GM10248 (cell line): ENCODE measurements at regions of chr1 and their contacts with region 1.

Region 1: DNA sequence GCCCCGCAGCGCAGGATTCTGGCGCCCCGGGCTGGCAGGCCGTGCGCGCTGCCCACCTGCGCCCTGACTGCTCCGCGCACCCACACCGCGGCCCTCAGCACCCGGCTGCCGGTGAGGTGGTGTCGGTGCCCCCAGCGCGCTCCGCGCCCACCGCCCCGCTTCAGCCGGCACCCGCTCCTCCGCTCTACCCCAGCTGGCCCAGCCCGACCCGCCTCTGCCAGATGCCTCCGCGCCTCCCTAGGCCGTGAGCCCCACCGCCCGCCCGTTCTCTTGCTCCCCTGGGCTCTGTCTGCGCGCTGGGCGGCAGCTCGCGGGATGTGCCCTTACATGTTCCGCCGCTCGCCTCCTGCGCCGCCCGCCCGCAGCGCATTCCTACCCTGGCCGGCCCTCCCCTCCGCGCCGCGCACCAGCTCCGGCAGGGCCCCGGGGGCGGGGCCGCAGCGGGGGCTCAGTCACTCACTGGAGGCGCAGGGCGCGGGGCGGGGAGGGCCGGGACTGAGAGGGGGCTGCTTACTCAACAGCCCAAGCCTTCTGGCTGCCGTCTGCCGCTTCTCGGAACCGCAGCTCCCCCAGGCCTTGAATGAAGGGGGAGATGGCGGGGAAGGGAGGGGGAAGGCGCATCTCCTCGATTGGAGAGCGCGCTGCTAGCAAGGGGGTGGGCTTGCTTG is at the start of gene PHLDA3:
- DNase-seq: peak; percentile 81
- CTCF ChIP-seq: no peak

Region 2: DNA sequence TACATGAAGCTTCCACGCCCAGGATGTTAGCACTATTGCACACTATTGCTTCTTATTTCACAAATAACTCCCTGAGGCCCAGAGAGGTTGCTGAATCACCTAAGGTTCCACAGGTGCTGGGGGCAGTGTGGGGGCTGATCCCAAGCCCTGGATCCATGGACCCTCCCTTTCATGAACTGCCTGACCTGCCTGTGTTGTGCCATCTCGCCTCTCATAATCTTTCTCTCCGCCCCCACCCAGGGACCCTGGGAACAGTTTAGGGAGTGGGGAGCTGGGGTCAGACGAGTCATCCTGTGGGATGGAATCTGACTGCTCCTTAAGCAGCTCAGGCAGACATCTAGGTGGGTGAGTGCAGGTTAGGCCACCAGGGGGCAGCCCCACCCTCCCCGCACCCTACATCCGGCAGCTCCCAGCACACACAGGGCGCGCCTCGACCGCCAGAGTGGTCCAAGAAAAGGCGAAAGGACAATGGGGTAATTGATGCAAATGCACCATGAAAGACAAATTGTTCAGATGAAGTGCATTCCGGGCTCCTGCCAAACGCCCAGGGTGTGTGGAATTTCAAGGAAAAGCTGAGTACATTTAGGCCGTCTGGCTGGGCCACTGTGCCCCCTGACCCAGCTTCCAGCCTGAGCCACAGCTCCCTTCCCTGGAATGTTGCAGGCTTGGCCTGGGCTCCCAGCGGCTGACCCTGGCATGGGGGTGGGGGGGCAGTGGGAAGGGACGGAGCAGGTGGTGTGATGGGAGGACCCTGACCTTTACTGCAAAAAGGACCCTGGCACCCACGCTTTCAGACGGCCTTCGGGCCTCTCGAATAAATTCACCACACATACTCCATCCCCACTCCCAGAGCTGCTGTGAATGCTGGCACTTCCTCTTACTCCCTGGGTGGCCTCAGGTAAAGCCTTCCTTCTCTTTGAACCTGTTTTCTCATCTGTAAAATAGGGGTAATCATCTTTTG is 20.8 kb before region 1 on chr1:
- CTCF ChIA-PET with region 1: interaction called, 22 read pairs
- POLR2A ChIA-PET with region 1: no interaction called
- DNase-seq: peak; percentile 89
- CTCF ChIP-seq: peak; percentile 80

Region 3: GRCh38 chr1:201456499-201457309 is 12.3 kb before region 1 on chr1:
- CTCF ChIA-PET with region 1: interaction called, 6 read pairs
- POLR2A ChIA-PET with region 1: interaction called, 12 read pairs
- DNase-seq: no peak
- CTCF ChIP-seq: no peak

Region 4: GRCh38 chr1:201724766-201725118 is 255.8 kb after region 1 on chr1:
- CTCF ChIA-PET with region 1: no interaction called
- POLR2A ChIA-PET with region 1: no interaction called
- DNase-seq: no peak
- CTCF ChIP-seq: no peak